Activated B cell treated with CpG ODN at 0.5 μM for 24 hours (primary cell): ENCODE measurements at regions of chr14 and their contacts with region 1.

Region 1: DNA sequence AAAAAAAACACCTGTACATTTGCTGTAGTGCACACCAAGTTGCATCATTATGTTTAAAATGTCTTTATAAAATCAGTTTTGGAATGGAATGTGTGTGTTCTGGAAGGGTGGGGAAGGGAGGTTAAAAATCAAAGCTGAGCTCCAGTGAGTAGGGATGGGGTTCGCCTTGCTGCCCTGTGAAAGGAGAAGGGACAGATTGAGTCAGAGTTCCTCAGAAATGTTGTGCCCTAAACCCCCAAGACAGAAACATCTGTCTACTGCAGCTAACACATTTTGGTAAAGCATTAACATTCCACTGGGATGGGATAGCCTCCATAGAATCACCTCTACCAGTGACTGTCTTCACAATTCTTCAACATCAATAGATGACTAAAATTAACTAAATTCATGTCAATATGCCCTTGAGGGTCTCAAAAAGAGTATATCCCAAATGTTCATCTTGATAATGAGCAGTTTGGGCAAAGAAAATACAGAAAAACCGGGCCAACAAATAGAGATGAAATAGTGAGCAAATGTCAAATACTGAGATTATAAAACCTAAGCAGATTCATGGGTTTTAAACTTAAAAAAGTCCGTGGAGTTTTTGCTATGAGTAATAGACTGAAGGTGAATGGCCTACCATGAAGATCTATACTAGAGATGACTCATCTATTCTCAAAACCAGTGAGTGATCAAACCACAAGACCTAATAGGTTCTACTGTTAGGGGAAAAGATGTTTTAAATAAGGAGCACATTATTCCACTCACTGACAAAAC is 5.4 kb downstream of the HNRNPC start:
- DNase-seq: no peak
- ATAC-seq: peak; percentile 68
- H3K4me3 Mint-ChIP-seq: peak overlapping the region; percentile 100
- H3K27ac Mint-ChIP-seq: peak overlapping the region; percentile 87
- H3K4me1 Mint-ChIP-seq: peaks cover 78% of the 10 kb centered on the region
- H3K27me3 Mint-ChIP-seq: no peaks in the 10 kb centered on the region
- CTCF ChIP-seq: no peak

Region 2: GRCh38 chr14:21251215-21251614 is 12.6 kb before region 1 on chr14:
- CTCF ChIA-PET with region 1: no interaction called
- POLR2A ChIA-PET with region 1: interaction called, 24 read pairs
- intact Hi-C with region 1: loop called (anchors 2 kb)
- DNase-seq: no peak
- ATAC-seq: no peak
- H3K4me3 Mint-ChIP-seq: no peak overlapping the region
- H3K27ac Mint-ChIP-seq: peak overlapping the region; percentile 4
- H3K4me1 Mint-ChIP-seq: peaks cover 36% of the 10 kb centered on the region
- H3K27me3 Mint-ChIP-seq: no peaks in the 10 kb centered on the region
- CTCF ChIP-seq: no peak

Region 3: DNA sequence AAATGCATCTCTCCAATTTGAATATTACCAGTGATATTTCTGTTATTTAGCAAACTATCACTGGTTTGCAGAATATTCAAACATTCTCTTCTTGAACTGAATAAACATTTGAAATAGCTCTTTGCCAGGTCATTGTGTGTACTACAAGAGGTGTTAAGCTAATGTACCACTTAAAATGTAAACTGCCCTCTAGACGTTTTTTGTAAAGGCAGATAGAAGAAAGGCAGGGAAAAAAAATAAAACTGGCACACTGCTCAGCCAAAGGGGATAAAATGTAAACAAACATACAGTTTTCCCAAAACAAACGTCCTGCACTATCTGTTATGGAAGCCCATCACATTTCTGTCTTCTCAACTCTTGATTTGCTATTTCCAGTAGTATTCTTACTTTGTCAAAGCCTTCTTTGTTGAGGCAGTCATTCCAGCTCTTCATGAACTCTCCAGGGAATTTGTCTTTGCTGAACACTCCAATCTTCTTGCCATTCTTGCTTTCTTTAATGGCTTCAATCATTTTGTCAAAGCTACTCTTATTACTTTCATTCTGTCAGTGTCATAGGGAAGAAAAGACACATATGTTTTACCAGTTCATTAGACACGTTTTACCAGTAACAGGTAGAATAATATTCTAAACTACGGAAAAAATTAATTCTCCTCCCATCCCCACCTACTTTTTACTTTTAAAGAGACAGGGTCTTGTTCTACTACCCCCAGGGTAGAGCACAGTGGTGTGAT is 106.3 kb after region 1 on chr14:
- CTCF ChIA-PET with region 1: no interaction called
- POLR2A ChIA-PET with region 1: no interaction called
- intact Hi-C with region 1: no loop called
- DNase-seq: no peak
- ATAC-seq: no peak
- H3K4me3 Mint-ChIP-seq: no peak overlapping the region
- H3K27ac Mint-ChIP-seq: no peak overlapping the region
- H3K4me1 Mint-ChIP-seq: peaks cover 5% of the 10 kb centered on the region
- H3K27me3 Mint-ChIP-seq: no peaks in the 10 kb centered on the region
- CTCF ChIP-seq: no peak